ENCODE measurements at regions of chr17 and their contacts with region 1.

Region 1: DNA sequence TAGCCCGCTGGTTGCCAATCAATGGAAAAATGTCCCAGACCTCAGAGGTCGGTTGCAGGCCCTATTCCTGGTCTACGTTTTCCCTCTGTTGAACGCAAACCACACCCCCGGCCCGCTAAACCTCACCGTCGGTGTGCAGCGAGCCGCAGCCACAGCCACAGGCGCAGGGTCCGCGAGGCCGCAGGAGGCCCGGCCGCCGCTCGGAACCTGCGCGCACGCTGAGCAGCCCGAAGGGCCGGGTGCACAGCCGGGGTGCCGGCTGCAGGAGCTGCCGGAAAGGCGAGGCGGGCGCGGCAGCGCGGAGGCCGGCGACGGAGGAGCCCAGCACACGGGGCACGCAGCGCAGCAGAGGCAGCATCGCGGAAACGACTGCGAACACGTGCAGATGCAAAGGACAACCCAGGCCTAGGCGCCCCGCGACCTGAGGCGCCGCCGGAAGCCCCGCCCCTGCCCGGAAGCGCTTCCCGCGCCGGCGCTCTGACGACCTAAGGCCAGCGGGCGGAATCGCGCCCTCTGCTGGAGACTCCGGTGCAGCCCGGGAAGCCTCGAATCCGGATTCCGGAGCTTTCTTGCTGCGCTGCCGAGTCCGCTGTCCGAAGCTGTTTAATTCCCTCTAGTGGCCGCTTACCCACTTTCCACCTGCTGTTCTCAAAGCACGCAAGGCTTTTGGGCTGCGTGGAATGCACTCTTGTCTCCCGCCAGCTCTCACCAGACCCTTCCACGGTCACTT is at the start of gene C1QBP:
- DNase-seq: peak; percentile 71
- ATAC-seq: peak; percentile 94
- H3K4me3 ChIP-seq: peak within 1 kb of the TSS; percentile 81
- H3K27ac ChIP-seq: peak within 1 kb of the TSS; percentile 82
- H3K4me1 ChIP-seq: peaks cover 9% of the 10 kb centered on the region; the same call in 1 of the 2 replicates
- H3K27me3 ChIP-seq: no peaks in the 10 kb centered on the region
- CTCF ChIP-seq: peak; percentile 93 to 99 (median 99); a peak in 5 of 6 replicates
- EP300 ChIP-seq: no peak
- POLR2A ChIP-seq: peak; percentile 95
- RAD21 ChIP-seq: peak; percentile 66
- polyA plus RNA-seq, gene C1QBP: 124 to 227 TPM

Region 2: GRCh38 chr17:5191541-5192417 is 247.1 kb before region 1 on chr17 and contains the start of gene ZNF594:
- CTCF ChIA-PET with region 1: interaction called, 35 read pairs
- POLR2A ChIA-PET with region 1: no interaction called
- RAD21 ChIA-PET with region 1: no interaction called
- SMC1A ChIA-PET with region 1: interaction called, 3 read pairs
- in situ Hi-C with region 1: no loop called
- intact Hi-C with region 1: loop called (anchors 5 kb)
- DNase-seq: peak; percentile 81
- ATAC-seq: peak; percentile 100
- H3K4me3 ChIP-seq: peak within 1 kb of the TSS; percentile 68
- H3K27ac ChIP-seq: peak within 1 kb of the TSS; percentile 88
- H3K4me1 ChIP-seq: peaks cover 3% of the 10 kb centered on the region; the same call in 1 of the 2 replicates
- H3K27me3 ChIP-seq: no peaks in the 10 kb centered on the region
- CTCF ChIP-seq: peak; percentile 82 to 92 (median 83)
- EP300 ChIP-seq: 0 out of 4 replicates have a peak, but pooled peaks of 1 of the 2 experiments have one; percentile 14
- POLR2A ChIP-seq: peak; percentile 97
- RAD21 ChIP-seq: peak; percentile 50
- polyA plus RNA-seq, gene ZNF594: 0.98 to 1.7 TPM

Region 3: GRCh38 chr17:5249615-5250014 is 189.3 kb before region 1 on chr17:
- CTCF ChIA-PET with region 1: interaction called, 55 read pairs
- POLR2A ChIA-PET with region 1: no interaction called
- RAD21 ChIA-PET with region 1: interaction called, 4 read pairs
- SMC1A ChIA-PET with region 1: interaction called, 10 read pairs
- in situ Hi-C with region 1: no loop called
- intact Hi-C with region 1: loop called (anchors 1 kb)
- DNase-seq: no peak
- ATAC-seq: peak; percentile 95
- H3K4me3 ChIP-seq: no peak overlapping the region
- H3K27ac ChIP-seq: no peak overlapping the region
- H3K4me1 ChIP-seq: peaks cover 9% of the 10 kb centered on the region
- H3K27me3 ChIP-seq: no peaks in the 10 kb centered on the region
- CTCF ChIP-seq: peak; percentile 51 to 69 (median 67)
- EP300 ChIP-seq: no peak
- POLR2A ChIP-seq: no peak
- RAD21 ChIP-seq: peak; percentile 82

Region 4: GRCh38 chr17:5381542-5381941 is 57.3 kb before region 1 on chr17:
- CTCF ChIA-PET with region 1: interaction called, 6 read pairs
- POLR2A ChIA-PET with region 1: interaction called, 7 read pairs
- RAD21 ChIA-PET with region 1: no interaction called
- SMC1A ChIA-PET with region 1: interaction called, 12 read pairs
- in situ Hi-C with region 1: no loop called
- intact Hi-C with region 1: no loop called
- DNase-seq: no peak
- ATAC-seq: no peak; the same call in 2 of the 3 replicates
- H3K4me3 ChIP-seq: no peak overlapping the region
- H3K27ac ChIP-seq: no peak overlapping the region
- H3K4me1 ChIP-seq: no peaks in the 10 kb centered on the region
- H3K27me3 ChIP-seq: no peaks in the 10 kb centered on the region
- CTCF ChIP-seq: no peak
- EP300 ChIP-seq: no peak
- POLR2A ChIP-seq: peak; percentile 49
- RAD21 ChIP-seq: no peak

Region 5: GRCh38 chr17:5419356-5419958 is 19.4 kb before region 1 on chr17 and contains the start of gene NUP88:
- CTCF ChIA-PET with region 1: interaction called, 23 read pairs
- POLR2A ChIA-PET with region 1: interaction called, 13 read pairs
- RAD21 ChIA-PET with region 1: interaction called, 15 read pairs
- SMC1A ChIA-PET with region 1: interaction called, 5 read pairs
- in situ Hi-C with region 1: no loop called
- intact Hi-C with region 1: no loop called
- DNase-seq: peak; percentile 94
- ATAC-seq: peak; percentile 96
- H3K4me3 ChIP-seq: peak within 1 kb of the TSS; percentile 87
- H3K27ac ChIP-seq: peak within 1 kb of the TSS; percentile 100
- H3K4me1 ChIP-seq: peaks cover 15% of the 10 kb centered on the region
- H3K27me3 ChIP-seq: no peaks in the 10 kb centered on the region
- CTCF ChIP-seq: no peak
- EP300 ChIP-seq: no peak
- POLR2A ChIP-seq: peak; percentile 95
- RAD21 ChIP-seq: no peak
- polyA plus RNA-seq, gene NUP88: 110 to 137 TPM

Measured in GM12878 (cell line).